ENCODE measurements at regions of chr11 and their contacts with region 1.

Region 1: GRCh38 chr11:3841426-3842350 is 929 bp upstream of the RHOG start:
- DNase-seq: peak; percentile 97
- H3K4me3 Mint-ChIP-seq: peak overlapping the region; percentile 76
- H3K27ac Mint-ChIP-seq: peak overlapping the region; percentile 93
- H3K4me1 Mint-ChIP-seq: peaks cover 42% of the 10 kb centered on the region
- H3K27me3 Mint-ChIP-seq: no peaks in the 10 kb centered on the region

Region 2: DNA sequence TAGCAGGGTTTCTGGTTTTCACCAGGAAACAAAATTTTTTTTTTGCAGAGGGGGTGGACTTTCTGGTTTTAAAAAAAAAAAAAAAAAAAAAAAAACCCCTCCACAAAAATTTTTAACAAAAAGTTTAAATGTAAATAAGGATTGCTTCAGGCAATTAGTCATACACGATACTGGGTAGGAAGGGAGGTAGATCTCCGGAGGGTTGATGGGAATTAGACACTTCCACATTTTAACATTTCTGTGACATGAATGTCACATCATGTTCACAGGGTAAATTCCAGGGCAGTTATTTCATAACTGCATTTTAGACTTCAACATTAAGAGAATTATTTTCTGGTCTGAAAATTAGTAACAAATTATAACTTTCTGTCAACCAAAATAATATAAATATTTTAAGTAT is 60.3 kb before region 1 on chr11:
- CTCF ChIA-PET with region 1: interaction called, 6 read pairs
- POLR2A ChIA-PET with region 1: interaction called, 3 read pairs
- intact Hi-C with region 1: loop called (anchors 1 kb)
- DNase-seq: no peak
- H3K4me3 Mint-ChIP-seq: no peak overlapping the region
- H3K27ac Mint-ChIP-seq: peak overlapping the region; percentile 33
- H3K4me1 Mint-ChIP-seq: peaks cover 54% of the 10 kb centered on the region
- H3K27me3 Mint-ChIP-seq: no peaks in the 10 kb centered on the region

Region 3: GRCh38 chr11:3797329-3798095 is 44.2 kb before region 1 on chr11 and contains the start of gene NUP98:
- CTCF ChIA-PET with region 1: interaction called, 4 read pairs
- POLR2A ChIA-PET with region 1: interaction called, 8 read pairs
- intact Hi-C with region 1: loop called (anchors 1 kb)
- DNase-seq: peak; percentile 100
- H3K4me3 Mint-ChIP-seq: peak within 1 kb of the TSS; percentile 90
- H3K27ac Mint-ChIP-seq: peak within 1 kb of the TSS; percentile 96
- H3K4me1 Mint-ChIP-seq: peaks cover 40% of the 10 kb centered on the region
- H3K27me3 Mint-ChIP-seq: no peaks in the 10 kb centered on the region
- total RNA-seq, gene NUP98: 90.6 to 104 TPM

Region 4: GRCh38 chr11:3824714-3825472 is 16.8 kb before region 1 on chr11:
- CTCF ChIA-PET with region 1: interaction called, 9 read pairs
- POLR2A ChIA-PET with region 1: interaction called, 21 read pairs
- intact Hi-C with region 1: loop called (anchors 1 kb)
- DNase-seq: peak; percentile 88
- H3K4me3 Mint-ChIP-seq: no peak overlapping the region
- H3K27ac Mint-ChIP-seq: peak overlapping the region; percentile 63
- H3K4me1 Mint-ChIP-seq: peaks cover 33% of the 10 kb centered on the region
- H3K27me3 Mint-ChIP-seq: no peaks in the 10 kb centered on the region

Region 5: GRCh38 chr11:3831378-3832239 is 10.1 kb before region 1 on chr11:
- CTCF ChIA-PET with region 1: interaction called, 245 read pairs
- POLR2A ChIA-PET with region 1: interaction called, 21 read pairs
- intact Hi-C with region 1: loop called (anchors 1 kb)
- DNase-seq: peak; percentile 33
- H3K4me3 Mint-ChIP-seq: peak overlapping the region; percentile 53
- H3K27ac Mint-ChIP-seq: peak overlapping the region; percentile 92
- H3K4me1 Mint-ChIP-seq: peaks cover 75% of the 10 kb centered on the region
- H3K27me3 Mint-ChIP-seq: no peaks in the 10 kb centered on the region

Region 6: DNA sequence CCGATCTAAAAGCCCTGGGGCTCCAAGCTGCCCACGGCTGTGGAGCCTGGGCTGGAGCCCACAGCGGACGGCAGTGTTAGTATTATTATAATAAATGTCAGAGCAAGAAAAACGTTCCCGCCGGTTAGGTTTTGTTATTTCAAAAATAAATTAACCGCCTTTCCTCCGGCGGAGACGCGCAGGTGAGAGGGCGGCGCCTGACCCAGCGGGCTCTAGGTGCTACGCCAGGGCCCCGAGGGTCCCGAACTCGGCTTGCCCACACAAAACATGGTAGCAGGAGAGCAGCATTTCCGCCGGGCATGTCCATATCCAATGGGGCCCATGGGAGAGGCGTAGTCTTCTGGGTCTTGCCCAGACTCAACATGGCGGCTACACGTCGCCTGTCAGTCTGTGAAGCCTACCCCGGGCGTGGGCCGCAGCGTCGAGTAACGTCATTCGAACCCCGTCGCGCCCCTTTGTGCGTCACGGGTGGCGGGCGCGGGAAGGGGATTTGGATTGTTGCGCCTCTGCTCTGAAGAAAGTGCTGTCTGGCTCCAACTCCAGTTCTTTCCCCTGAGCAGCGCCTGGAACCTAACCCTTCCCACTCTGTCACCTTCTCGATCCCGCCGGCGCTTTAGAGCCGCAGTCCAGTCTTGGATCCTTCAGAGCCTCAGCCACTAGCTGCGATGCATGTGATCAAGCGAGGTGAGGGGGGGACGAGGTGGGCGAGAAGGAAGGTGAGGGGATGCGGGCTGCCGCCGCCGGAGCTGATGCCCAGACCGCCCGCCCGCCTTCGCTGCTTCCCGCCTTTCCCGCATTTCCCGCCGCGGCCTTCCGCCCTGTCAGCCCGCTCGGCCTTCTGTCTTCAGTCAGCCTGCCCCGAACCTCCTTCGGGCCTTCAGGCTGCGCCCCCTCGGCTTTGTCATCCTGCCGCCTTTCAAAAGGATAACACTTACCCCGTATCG is 252.9 kb after region 1 on chr11 and contains the start of gene RRM1:
- CTCF ChIA-PET with region 1: interaction called, 4 read pairs
- POLR2A ChIA-PET with region 1: interaction called, 12 read pairs
- intact Hi-C with region 1: loop called (anchors 1 kb)
- DNase-seq: peak; percentile 97
- H3K4me3 Mint-ChIP-seq: peak within 1 kb of the TSS; percentile 95
- H3K27ac Mint-ChIP-seq: peak within 1 kb of the TSS; percentile 92
- H3K4me1 Mint-ChIP-seq: peaks cover 71% of the 10 kb centered on the region
- H3K27me3 Mint-ChIP-seq: no peaks in the 10 kb centered on the region
- total RNA-seq, gene RRM1: 201 to 203 TPM